Ovary (tissue), 10 donors: ENCODE measurements at regions of chr3 and their contacts with region 1.

Region 1: GRCh38 chr3:17742108-17742879 is at the start of gene TBC1D5:
- DNase-seq: peak; percentile 95 to 97 (median 95)
- H3K4me3 ChIP-seq: peak within 1 kb of the TSS; percentile 91
- H3K27ac ChIP-seq: peak within 1 kb of the TSS; percentile 93 to 96
- H3K4me1 ChIP-seq: peaks cover 5% of the 10 kb centered on the region
- H3K27me3 ChIP-seq: no peaks in the 10 kb centered on the region
- CTCF ChIP-seq: no peak
- EP300 ChIP-seq: no peak
- POLR2A ChIP-seq: peak; percentile 63
- total RNA-seq, gene TBC1D5: 48.8 to 73.5 (median 61.0) TPM

Region 2: DNA sequence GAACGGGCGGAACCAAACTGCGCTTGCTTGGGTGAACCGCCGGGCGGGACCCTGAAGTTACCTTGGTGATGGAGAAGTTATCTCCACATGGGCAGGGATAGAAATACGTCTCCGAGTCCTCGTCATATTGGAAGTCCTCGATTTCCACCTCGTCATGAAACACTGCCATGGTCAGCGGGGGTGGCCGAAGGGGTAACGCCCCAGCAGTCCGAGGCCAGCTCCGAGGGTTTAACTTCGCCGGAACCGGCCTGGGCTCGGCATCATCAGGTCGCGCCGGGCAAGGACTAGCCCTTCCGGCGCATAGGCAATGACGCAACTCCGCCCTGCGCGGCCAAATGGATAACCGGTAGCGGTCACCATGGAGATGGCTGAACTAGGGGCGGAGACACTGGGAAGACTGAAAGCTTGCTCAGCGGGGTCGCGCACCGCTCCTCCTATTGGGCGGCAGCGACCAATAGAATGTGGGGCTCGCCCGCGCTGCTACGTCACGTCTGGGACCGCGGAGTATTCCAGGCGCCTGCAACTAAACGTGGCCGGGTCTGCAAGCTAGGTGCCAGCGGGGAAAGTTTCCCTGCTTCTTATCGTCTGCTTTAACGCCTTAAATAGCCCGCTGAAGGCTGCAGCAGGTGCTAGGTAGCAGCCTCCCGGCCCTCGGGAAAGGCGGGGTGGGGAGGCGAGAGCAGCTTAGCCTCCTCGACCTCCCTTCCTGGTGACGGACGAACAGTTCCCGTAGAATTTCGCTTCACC is 1477.4 kb before region 1 on chr3 and contains the starts of genes DPH3 and OXNAD1:
- intact Hi-C with region 1: loop called in 1 of 4 experiments (anchors 5 kb)
- DNase-seq: peak; percentile 100
- H3K4me3 ChIP-seq: peak within 1 kb of the TSS; percentile 73
- H3K27ac ChIP-seq: peak within 1 kb of the TSS; percentile 59 to 78
- H3K4me1 ChIP-seq: peaks cover 3% of the 10 kb centered on the region
- H3K27me3 ChIP-seq: no peaks in the 10 kb centered on the region
- CTCF ChIP-seq: peak in 2 of 3 donors; percentile 35 to 43
- EP300 ChIP-seq: no peak
- POLR2A ChIP-seq: peak; percentile 68
- total RNA-seq, gene DPH3: 10.8 to 28.3 (median 15.5) TPM
- total RNA-seq, gene OXNAD1: 7.9 to 16.3 (median 12.4) TPM

Region 3: GRCh38 chr3:16816048-16816780 is 926.1 kb before region 1 on chr3:
- intact Hi-C with region 1: no loop called
- DNase-seq: no peak
- H3K4me3 ChIP-seq: no peak overlapping the region
- H3K27ac ChIP-seq: no peak overlapping the region
- H3K4me1 ChIP-seq: no peaks in the 10 kb centered on the region
- H3K27me3 ChIP-seq: no peaks in the 10 kb centered on the region
- CTCF ChIP-seq: no peak
- EP300 ChIP-seq: no peak
- POLR2A ChIP-seq: no peak

Region 4: DNA sequence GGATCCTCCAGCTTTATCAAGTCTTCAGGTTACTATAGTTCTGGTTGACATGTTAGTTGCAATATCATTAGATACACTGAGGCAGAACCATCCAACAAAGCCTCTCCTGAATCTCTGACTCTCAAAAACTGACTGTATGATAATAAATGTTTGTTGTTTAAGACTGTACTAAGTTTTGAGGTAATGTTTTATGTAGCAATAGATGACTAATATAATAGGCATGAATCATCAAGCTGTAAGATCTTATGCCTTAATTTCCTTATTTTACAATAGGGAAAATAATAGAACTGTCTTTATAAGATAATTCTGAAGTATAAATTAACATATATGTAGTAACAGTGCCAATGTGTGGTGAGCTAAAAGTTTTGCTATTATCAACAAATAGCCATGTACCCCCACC is 89.1 kb after region 1 on chr3:
- intact Hi-C with region 1: no loop called
- DNase-seq: no peak
- H3K4me3 ChIP-seq: no peak overlapping the region
- H3K27ac ChIP-seq: no peak overlapping the region
- H3K4me1 ChIP-seq: no peaks in the 10 kb centered on the region
- H3K27me3 ChIP-seq: no peaks in the 10 kb centered on the region
- CTCF ChIP-seq: no peak
- EP300 ChIP-seq: no peak
- POLR2A ChIP-seq: no peak